CD8-positive, alpha-beta T cell (primary cell): ENCODE measurements at regions of chr14 and their contacts with region 1.

Region 1: DNA sequence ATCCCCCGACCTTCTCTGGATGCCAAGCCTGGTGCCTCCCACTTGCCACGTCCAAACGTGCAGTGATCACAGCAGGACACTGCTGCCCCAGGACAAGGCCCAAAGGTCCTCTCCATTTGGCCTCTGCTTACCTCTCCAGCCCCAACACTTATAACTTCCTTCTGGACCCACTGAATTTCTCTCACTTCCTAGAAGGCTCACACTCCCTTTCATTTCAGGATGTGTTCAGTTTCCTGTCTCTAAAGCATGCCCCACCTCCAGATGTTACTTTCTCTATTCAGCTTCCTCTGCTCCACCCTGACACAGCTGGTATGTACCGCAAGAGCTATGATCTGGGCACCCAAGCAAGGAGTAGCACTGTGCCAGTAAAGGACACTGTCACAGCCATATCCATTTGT is 33.0 kb downstream of the CDKL1 start:
- DNase-seq: peak in 8 of 9 experiments; percentile 29 to 86 (median 54)
- ATAC-seq: peak; percentile 87
- H3K4me3 ChIP-seq: peak overlapping the region; percentile 44 to 60
- H3K4me3 Mint-ChIP-seq: peak overlapping the region; percentile 87
- H3K27ac ChIP-seq: peak overlapping the region; percentile 75 to 93
- H3K27ac Mint-ChIP-seq: peak overlapping the region; percentile 92
- H3K4me1 ChIP-seq: peaks cover 13% of the 10 kb centered on the region
- H3K4me1 Mint-ChIP-seq: peaks cover 38% of the 10 kb centered on the region
- H3K27me3 ChIP-seq: no peaks in the 10 kb centered on the region
- H3K27me3 Mint-ChIP-seq: no peaks in the 10 kb centered on the region
- CTCF ChIP-seq: no peak

Region 2: GRCh38 chr14:50396631-50397390 is 33.1 kb after region 1 on chr14 and contains the start of gene CDKL1:
- CTCF ChIA-PET with region 1: no interaction called
- POLR2A ChIA-PET with region 1: interaction called, 8 read pairs
- intact Hi-C with region 1: loop called (anchors 5 kb)
- DNase-seq: peak in 8 of 9 experiments; percentile 7 to 61 (median 30)
- ATAC-seq: peak; percentile 66
- H3K4me3 ChIP-seq: peak within 1 kb of the TSS; percentile 55 to 56
- H3K4me3 Mint-ChIP-seq: peak within 1 kb of the TSS; percentile 86
- H3K27ac ChIP-seq: no peak within 1 kb of the TSS
- H3K27ac Mint-ChIP-seq: no peak within 1 kb of the TSS
- H3K4me1 ChIP-seq: peaks cover 6% of the 10 kb centered on the region
- H3K4me1 Mint-ChIP-seq: peaks cover 10% of the 10 kb centered on the region
- H3K27me3 ChIP-seq: no peaks in the 10 kb centered on the region
- H3K27me3 Mint-ChIP-seq: peaks cover 3% of the 10 kb centered on the region
- CTCF ChIP-seq: no peak
- total RNA-seq, gene CDKL1: 1.2 to 1.5 TPM